AG04449 (cell line): ENCODE measurements at regions of chr10 and their contacts with region 1.

Region 1: GRCh38 chr10:60646966-60647796 is 131.1 kb upstream of the CDK1 start:
- DNase-seq: no peak
- H3K4me3 ChIP-seq: no peak overlapping the region
- CTCF ChIP-seq: peak; percentile 42

Region 2: DNA sequence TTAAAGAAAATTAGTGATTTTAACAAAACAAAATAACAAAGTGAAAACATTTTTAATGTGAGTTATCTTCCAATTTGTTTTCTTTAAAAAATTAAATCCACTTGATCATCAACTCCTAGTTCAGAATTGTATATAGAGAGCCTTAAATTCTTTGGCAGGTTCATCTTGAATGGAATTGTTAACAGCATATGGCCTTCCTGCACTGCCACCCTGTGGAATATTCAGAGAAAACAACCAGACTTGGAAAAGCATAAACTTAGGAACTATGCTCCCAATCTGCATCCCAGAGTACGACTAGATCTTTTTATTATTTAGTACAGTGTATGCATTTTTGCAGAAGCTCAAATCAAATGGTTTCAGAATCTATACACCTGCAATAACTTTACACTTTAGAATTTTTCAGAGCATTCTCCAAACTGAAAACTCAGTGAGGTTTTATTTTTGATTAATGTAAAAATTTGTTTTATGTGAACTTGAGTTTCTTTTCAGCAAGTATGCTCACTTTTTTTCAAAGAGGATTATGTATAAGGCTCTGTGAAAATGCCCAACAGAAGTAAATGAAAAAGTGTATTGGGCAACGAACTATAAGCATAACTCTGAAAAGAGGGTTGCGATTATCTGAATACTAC is 212.6 kb before region 1 on chr10:
- CTCF ChIA-PET with region 1: interaction called, 471 read pairs
- POLR2A ChIA-PET with region 1: no interaction called
- DNase-seq: no peak
- H3K4me3 ChIP-seq: no peak overlapping the region
- CTCF ChIP-seq: peak; percentile 49

Region 3: GRCh38 chr10:60453036-60453435 is 194.1 kb before region 1 on chr10:
- CTCF ChIA-PET with region 1: interaction called, 12 read pairs
- POLR2A ChIA-PET with region 1: no interaction called
- DNase-seq: no peak
- H3K4me3 ChIP-seq: no peak overlapping the region
- CTCF ChIP-seq: no peak

Region 4: DNA sequence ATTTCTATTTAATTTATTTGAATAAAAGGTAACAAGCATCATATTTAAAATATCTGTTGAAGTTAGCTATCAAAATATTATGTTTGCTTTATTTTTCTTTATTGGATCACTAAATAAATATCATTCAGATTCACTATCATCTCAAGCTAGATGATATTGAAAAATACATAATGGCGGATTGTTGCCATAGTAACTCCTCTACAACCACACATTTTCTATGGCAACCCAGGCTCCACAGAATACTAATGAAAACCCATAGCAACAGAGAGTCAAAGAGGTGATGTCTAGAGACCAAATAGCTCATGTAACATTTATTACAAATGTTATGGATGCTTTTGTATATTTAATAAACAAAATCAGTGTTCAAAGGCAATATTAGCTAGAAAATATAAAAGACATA is 17.8 kb before region 1 on chr10:
- CTCF ChIA-PET with region 1: interaction called, 37 read pairs
- POLR2A ChIA-PET with region 1: no interaction called
- DNase-seq: no peak
- H3K4me3 ChIP-seq: no peak overlapping the region
- CTCF ChIP-seq: no peak

Region 5: GRCh38 chr10:60769406-60769805 is 122.2 kb after region 1 on chr10:
- CTCF ChIA-PET with region 1: interaction called, 60 read pairs
- POLR2A ChIA-PET with region 1: no interaction called
- DNase-seq: no peak
- H3K4me3 ChIP-seq: no peak overlapping the region
- CTCF ChIP-seq: no peak